ENCODE measurements at regions of chr16 and their contacts with region 1.

Region 1: DNA sequence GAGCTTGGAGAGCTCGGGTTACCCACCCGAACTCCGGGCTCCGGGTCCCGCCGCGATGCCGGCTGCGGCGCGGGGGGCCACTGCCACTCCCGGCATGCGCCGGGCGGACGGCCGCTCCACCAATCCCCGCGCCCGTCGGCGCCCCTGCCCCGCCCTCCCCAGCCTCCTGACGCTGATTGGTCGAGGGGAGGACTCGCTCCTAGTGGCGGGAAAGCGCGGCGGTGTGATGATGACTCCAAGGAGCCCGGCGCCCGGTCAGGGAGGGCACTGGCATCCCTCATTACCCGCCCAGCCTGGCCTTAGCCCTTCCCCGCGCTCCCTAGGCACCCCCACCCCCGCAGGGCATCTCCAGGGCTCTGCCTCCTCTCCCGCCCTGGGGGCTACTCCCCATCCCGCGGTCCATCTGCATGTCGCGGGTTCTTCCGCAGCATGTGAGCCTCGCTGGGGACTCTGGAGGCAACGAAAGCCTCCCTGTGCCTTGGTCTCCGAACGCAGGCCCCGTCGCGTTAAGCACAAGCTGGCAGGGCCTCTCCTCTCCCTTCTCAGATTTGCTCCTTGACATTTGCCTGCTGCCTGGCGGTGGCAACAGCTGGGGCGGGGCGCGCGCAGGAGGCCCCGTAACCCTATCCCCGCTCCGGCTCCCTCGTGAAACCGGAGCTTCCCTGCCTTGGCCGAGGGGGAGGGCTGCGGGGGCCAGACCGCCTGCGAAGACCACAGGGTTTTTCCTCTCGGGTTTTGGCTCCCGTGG is 1.7 kb downstream of the ATP2A1 start:
- DNase-seq: peak; percentile 46
- ATAC-seq: peak; percentile 96
- H3K4me3 ChIP-seq: peak overlapping the region; percentile 95
- H3K27ac ChIP-seq: peak overlapping the region; percentile 37; the same call in 1 of the 2 replicates
- H3K4me1 ChIP-seq: peaks cover 13% of the 10 kb centered on the region
- H3K27me3 ChIP-seq: no peaks in the 10 kb centered on the region
- CTCF ChIP-seq: no peak
- EP300 ChIP-seq: no peak
- POLR2A ChIP-seq: peak; percentile 64
- RAD21 ChIP-seq: no peak

Region 2: GRCh38 chr16:28910086-28911031 is 30.3 kb after region 1 on chr16:
- CTCF ChIA-PET with region 1: no interaction called
- POLR2A ChIA-PET with region 1: no interaction called
- RAD21 ChIA-PET with region 1: no interaction called
- SMC1A ChIA-PET with region 1: interaction called, 5 read pairs
- in situ Hi-C with region 1: loop called (anchors 5 kb)
- intact Hi-C with region 1: no loop called
- DNase-seq: no peak
- ATAC-seq: peak; percentile 77
- H3K4me3 ChIP-seq: no peak overlapping the region
- H3K27ac ChIP-seq: peak overlapping the region; percentile 50
- H3K4me1 ChIP-seq: peaks cover 8% of the 10 kb centered on the region
- H3K27me3 ChIP-seq: no peaks in the 10 kb centered on the region
- CTCF ChIP-seq: no peak
- EP300 ChIP-seq: no peak
- POLR2A ChIP-seq: no peak
- RAD21 ChIP-seq: no peak

Region 3: GRCh38 chr16:28930652-28931051 is 50.6 kb after region 1 on chr16:
- CTCF ChIA-PET with region 1: interaction called, 7 read pairs
- POLR2A ChIA-PET with region 1: interaction called, 5 read pairs
- RAD21 ChIA-PET with region 1: interaction called, 12 read pairs
- SMC1A ChIA-PET with region 1: no interaction called
- in situ Hi-C with region 1: no loop called
- intact Hi-C with region 1: loop called (anchors 5 kb)
- DNase-seq: peak; percentile 86
- ATAC-seq: peak; percentile 65
- H3K4me3 ChIP-seq: no peak overlapping the region
- H3K27ac ChIP-seq: peak overlapping the region; percentile 92
- H3K4me1 ChIP-seq: peaks cover 16% of the 10 kb centered on the region
- H3K27me3 ChIP-seq: no peaks in the 10 kb centered on the region
- CTCF ChIP-seq: no peak
- EP300 ChIP-seq: peak in 1 of 2 experiments; percentile 37; a peak in 1 of 4 replicates
- POLR2A ChIP-seq: peak; percentile 23; the same call in 1 of the 2 replicates
- RAD21 ChIP-seq: no peak

Region 4: GRCh38 chr16:29139261-29139811 is 259.3 kb after region 1 on chr16:
- CTCF ChIA-PET with region 1: no interaction called
- POLR2A ChIA-PET with region 1: no interaction called
- RAD21 ChIA-PET with region 1: no interaction called
- SMC1A ChIA-PET with region 1: no interaction called
- in situ Hi-C with region 1: no loop called
- intact Hi-C with region 1: no loop called
- DNase-seq: no peak
- ATAC-seq: no peak
- H3K4me3 ChIP-seq: no peak overlapping the region
- H3K27ac ChIP-seq: no peak overlapping the region
- H3K4me1 ChIP-seq: no peaks in the 10 kb centered on the region
- H3K27me3 ChIP-seq: no peaks in the 10 kb centered on the region
- CTCF ChIP-seq: no peak
- EP300 ChIP-seq: no peak
- POLR2A ChIP-seq: no peak
- RAD21 ChIP-seq: no peak

Measured in GM12878 (cell line).